Cardiac septum (tissue), 1 donor: ENCODE measurements at regions of chr17 and their contacts with region 1.

Region 1: DNA sequence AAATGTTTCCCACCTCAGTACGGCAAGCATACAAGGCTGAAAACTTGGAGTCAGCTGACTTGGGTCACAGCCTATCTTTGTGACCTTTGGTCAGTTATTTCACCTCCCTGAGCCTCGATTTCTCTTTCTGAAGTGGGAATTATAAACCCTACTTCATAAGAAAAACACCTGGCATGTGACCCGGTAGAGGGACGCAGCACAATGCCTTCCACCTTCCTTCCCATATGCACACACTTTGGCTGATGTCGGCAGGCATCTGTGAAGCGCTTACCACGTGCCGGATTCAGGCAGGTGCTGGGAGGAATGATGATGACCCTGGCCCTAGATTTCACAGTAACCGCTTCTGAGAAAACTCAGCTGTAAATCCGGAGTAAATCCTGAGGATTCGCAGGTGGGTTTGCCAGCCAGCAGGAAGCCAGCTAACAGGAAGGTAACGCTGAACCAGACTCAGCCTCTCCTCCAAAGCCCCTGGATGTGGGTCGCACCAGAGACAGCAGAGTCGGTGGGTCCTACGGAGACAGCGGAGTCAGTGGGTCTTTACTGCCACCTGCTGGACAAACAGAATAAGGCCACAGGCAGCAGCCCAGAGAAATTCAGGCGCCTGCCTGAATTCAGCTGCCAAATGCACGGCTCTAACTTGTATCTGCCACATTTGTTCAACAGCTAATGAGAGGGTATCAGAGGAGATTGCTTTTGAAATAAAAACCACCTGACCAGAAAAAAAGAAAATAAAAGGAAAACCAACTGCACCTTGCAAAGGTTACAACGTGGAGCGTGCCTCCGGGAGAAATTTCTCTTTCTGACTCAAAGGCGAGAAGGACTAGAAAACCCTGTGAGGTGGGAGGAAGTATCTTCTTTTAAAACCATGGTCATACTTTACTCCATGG is 16.6 kb downstream of the COPRS start:
- DNase-seq: peak; percentile 77

Region 2: DNA sequence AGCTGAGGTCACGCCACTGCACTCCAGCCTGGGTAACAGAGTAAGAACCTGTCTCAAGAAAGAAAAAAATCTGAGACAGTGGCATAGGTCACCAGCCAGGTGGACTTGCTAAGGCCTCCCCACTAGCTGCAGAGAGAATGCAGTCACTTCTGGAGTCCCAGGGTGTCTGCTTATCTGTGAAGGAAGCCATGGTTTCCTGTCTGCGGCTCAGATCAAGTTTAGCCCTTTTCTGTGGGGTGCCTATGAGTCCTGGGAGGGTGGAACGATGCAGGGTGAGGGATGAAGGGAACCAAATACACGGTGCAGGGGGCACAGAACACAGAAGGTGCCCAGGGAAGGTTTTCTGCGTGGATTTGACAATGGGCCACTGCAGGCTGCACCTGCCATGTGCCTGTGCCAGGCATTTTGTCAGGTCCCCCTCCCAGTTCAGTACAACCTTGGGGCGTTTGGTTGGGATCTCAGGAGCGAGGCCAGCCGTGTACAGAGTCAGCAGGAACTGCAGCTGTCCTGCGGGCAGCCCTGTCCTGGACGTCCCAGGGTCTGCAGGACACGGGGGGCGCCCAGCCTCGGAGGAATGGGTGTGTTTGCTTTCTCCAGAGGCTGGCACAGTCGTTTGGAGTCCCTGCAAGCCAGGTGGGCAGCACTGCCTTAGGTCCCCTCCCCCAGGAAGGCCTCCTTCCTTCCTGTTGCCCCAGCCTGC is 409.2 kb before region 1 on chr17:
- intact Hi-C with region 1: loop called (anchors 2 kb)
- DNase-seq: no peak

Region 3: GRCh38 chr17:31549525-31550388 is 292.7 kb before region 1 on chr17:
- intact Hi-C with region 1: loop called (anchors 2 kb)
- DNase-seq: peak; percentile 95

Region 4: DNA sequence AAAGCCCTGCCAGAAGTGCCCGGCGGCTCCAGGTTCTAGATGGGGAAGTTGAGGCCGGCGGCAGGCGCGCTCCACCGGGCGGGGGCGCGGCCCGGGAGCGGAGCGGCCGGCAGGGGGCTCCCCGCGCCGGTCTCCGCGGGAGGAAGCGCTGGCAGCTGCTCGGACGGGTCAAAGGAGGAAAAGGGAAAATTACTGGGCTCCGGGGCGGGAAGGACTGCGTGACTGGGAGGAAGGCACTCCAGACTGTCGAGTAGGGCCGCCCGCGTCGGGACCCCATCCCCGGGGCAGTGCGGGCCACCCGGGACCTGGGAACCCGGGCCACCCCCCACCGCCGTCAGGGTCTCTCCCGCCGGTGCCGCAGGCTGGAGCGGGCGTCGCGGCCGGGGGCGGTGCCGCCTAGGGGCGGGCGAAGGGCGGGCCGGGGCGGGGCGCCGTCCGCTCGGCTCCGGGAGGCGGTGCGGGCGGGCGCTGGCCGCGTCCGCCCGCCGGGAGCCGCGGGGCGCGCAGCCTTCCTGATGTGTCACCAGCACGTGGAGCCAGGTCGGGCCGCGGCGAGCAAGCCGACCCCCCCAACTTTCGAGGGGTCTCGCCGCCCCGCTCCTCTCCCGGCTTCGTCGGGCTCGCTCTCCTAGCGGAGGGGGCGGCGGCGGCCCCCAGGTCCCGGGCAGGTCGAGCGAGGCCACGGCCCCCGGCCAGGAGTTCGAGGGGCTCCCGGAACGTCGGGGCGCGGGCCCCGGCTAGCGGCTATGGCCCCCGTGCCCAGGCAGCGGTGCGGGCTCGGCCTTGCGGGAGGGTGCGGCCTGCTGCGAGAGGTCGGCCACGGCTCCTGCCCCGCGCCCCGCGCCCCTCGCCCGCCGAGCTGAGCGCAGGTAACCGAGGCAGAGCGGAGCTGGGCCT is 283.4 kb before region 1 on chr17:
- intact Hi-C with region 1: loop called (anchors 1 kb)
- DNase-seq: peak; percentile 91

Region 5: GRCh38 chr17:31696184-31696602 is 146.2 kb before region 1 on chr17:
- intact Hi-C with region 1: loop called (anchors 5 kb)
- DNase-seq: peak; percentile 88

Region 6: GRCh38 chr17:31869797-31870568 is 27.6 kb after region 1 on chr17:
- intact Hi-C with region 1: no loop called
- DNase-seq: no peak

Region 7: DNA sequence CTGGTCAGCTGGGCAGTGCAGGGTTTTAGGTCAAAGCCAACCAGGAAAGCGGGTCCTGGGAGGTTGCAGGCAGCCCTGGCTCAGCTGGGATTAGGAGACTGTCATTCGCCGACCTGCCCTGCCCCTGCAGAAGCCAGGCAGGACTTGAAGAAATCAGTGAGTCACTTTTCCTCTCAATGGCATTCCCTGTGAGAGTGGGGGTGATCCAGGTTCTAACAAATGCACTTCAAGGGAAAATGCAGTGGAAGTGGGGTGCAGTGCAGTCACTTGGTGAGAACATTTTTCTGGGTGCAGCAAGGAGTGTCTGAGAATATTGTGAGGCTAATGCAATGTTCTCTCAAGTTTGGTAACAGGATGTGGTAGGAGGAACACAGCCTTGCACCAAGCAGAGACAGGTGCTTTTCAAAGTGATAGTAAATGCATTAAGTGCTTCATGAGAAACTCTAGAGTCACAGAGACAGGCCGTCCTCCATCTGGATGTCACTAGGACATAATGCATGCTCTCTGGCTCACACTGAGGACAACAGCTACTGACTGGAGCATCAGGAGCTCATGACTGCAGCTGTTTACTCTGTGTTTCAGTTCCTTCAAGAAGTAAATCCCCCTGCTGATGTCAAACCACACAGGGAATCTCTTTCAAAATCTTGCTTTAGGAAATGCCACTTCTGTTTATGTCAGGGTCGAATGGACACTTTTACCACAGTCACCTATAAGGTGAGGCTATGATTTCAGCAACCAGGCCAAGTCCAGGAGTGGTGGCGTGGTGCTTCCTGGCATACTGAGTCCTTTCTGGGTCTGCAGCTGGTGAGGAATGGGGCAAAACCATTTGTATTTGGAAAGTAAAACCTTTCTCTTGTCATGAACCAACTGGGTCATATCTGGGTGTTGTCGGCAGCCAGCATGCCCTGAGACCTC is 661.1 kb after region 1 on chr17:
- intact Hi-C with region 1: no loop called
- DNase-seq: no peak